CD8-positive, alpha-beta T cell (primary cell): ENCODE measurements at regions of chr19 and their contacts with region 1.

Region 1: DNA sequence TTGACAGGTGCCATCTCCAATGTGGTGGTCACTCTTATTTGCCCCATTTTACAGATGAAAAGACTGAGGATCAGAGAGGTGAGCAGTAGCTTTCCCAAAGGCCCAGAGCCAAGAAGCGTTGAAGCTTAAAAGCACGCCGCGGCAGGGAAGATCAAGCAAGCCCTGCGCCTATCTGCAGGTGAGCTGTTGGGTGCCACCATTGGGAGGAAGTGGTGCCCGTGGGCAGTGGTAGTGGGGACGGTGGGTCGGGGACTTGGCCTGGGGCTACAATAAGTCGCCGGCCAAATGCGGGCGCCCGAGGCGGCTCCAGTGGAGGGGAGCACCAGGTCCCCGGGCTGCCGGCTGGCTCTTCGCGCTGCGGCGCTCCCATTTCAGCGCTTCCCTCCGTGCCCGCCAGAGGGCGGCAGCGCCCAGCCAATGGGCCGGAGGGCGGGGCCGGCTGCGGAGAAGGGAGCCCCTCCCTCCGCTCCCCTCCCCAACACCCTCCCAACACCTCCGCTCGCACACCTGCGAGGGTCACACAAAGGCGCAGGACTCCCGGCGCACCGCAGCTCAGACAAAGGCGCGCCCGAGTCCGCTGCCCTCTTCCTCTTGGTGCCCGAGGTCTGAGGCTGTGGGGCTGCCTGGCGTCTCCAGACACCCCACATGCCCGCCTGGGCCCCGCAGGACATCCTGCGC is 744 bp upstream of the POU2F2 start:
- DNase-seq: peak; percentile 69 to 95 (median 83)
- ATAC-seq: peak; percentile 69
- H3K4me3 ChIP-seq: peak overlapping the region; percentile 64 to 96
- H3K4me3 Mint-ChIP-seq: peak overlapping the region; percentile 83
- H3K27ac ChIP-seq: peak overlapping the region; percentile 54 to 68
- H3K27ac Mint-ChIP-seq: peak overlapping the region; percentile 86
- H3K4me1 ChIP-seq: peaks cover 66% of the 10 kb centered on the region
- H3K4me1 Mint-ChIP-seq: peaks cover 63% of the 10 kb centered on the region
- H3K27me3 ChIP-seq: no peaks in the 10 kb centered on the region
- H3K27me3 Mint-ChIP-seq: no peaks in the 10 kb centered on the region
- CTCF ChIP-seq: peak; percentile 93

Region 2: GRCh38 chr19:42048992-42049391 is 84.0 kb before region 1 on chr19:
- CTCF ChIA-PET with region 1: no interaction called
- POLR2A ChIA-PET with region 1: no interaction called
- intact Hi-C with region 1: no loop called
- DNase-seq: no peak
- ATAC-seq: no peak
- H3K4me3 ChIP-seq: peak overlapping the region in 1 of 2 experiments; percentile 8
- H3K4me3 Mint-ChIP-seq: peak overlapping the region; percentile 55
- H3K27ac ChIP-seq: no peak overlapping the region
- H3K27ac Mint-ChIP-seq: no peak overlapping the region
- H3K4me1 ChIP-seq: no peaks in the 10 kb centered on the region
- H3K4me1 Mint-ChIP-seq: peaks cover 6% of the 10 kb centered on the region
- H3K27me3 ChIP-seq: no peaks in the 10 kb centered on the region
- H3K27me3 Mint-ChIP-seq: peaks cover 2% of the 10 kb centered on the region
- CTCF ChIP-seq: no peak

Region 3: DNA sequence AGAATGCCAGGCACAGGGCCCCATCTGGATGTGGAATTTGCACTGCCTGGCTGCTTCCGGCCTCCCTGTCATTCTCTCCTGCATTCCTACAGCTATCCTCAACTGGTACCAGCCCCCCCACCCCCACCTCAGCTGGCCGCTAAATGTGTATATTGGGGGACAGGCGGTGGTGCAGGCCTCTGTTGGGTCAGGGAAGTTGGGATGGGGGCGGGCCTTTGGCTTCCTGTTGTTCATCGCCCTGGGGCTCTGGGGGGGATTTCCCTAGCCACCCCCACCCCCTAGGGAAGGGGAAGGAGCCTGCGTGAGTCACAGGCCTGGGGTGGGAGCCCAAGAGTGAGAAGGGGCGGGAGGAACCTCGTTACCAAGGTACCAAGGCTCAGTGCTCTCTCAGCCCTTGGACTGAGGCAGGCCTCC is 11.3 kb before region 1 on chr19:
- CTCF ChIA-PET with region 1: interaction called, 20 read pairs
- POLR2A ChIA-PET with region 1: interaction called, 9 read pairs
- intact Hi-C with region 1: loop called in 1 of 2 experiments (anchors 1 kb)
- DNase-seq: peak; percentile 24 to 90 (median 81)
- ATAC-seq: peak; percentile 89
- H3K4me3 ChIP-seq: peak overlapping the region; percentile 19 to 27
- H3K4me3 Mint-ChIP-seq: peak overlapping the region; percentile 66
- H3K27ac ChIP-seq: peak overlapping the region; percentile 36 to 82
- H3K27ac Mint-ChIP-seq: peak overlapping the region; percentile 95
- H3K4me1 ChIP-seq: peaks cover 49% of the 10 kb centered on the region
- H3K4me1 Mint-ChIP-seq: peaks cover 59% of the 10 kb centered on the region
- H3K27me3 ChIP-seq: no peaks in the 10 kb centered on the region
- H3K27me3 Mint-ChIP-seq: no peaks in the 10 kb centered on the region
- CTCF ChIP-seq: no peak

Region 4: DNA sequence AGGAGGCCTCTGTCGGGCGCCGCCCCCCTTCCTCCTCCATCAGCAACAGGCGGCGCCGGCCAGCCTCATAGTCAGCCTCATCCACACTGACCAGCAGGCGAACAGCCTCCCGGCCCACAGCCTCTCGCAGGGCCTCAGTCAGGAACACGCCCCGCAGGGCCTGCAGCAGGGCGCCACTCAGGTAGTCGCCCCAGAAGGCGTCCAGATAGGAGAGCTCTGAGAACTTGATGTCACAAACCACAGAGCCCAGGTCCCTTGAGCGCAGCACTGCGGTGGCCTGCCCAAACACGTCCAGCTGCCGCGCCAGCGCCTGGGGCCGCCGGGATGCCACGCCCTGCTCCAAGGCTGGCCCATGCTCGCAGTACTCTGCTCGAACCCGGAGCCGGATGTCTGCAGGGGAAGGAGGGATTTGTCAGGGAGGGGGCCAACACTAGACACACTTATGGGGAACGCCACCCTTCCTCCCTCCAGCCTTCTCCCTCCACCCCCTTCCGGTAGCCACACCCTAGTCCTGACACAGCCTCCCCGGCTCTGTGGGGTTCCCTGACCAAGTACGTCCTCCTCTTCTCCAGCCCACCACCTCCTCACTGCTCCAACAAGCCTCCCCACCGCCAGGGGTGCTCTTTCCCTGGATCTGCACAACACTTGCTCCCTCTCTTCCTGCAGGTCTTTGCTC is 66.6 kb after region 1 on chr19:
- CTCF ChIA-PET with region 1: interaction called, 5 read pairs
- POLR2A ChIA-PET with region 1: interaction called, 3 read pairs
- intact Hi-C with region 1: loop called (anchors 1 kb)
- DNase-seq: peak in 7 of 9 experiments; percentile 36 to 80 (median 64)
- ATAC-seq: peak; percentile 30
- H3K4me3 ChIP-seq: peak overlapping the region; percentile 50 to 59
- H3K4me3 Mint-ChIP-seq: peak overlapping the region; percentile 87
- H3K27ac ChIP-seq: peak overlapping the region; percentile 88 to 93
- H3K27ac Mint-ChIP-seq: peak overlapping the region; percentile 95
- H3K4me1 ChIP-seq: peaks cover 84% of the 10 kb centered on the region
- H3K4me1 Mint-ChIP-seq: peaks cover 81% of the 10 kb centered on the region
- H3K27me3 ChIP-seq: no peaks in the 10 kb centered on the region
- H3K27me3 Mint-ChIP-seq: no peaks in the 10 kb centered on the region
- CTCF ChIP-seq: peak; percentile 29

Region 5: GRCh38 chr19:42268704-42269477 is 135.9 kb after region 1 on chr19 and contains the start of gene CIC:
- CTCF ChIA-PET with region 1: interaction called, 3 read pairs
- POLR2A ChIA-PET with region 1: no interaction called
- intact Hi-C with region 1: loop called in 1 of 2 experiments (anchors 1 kb)
- DNase-seq: peak; percentile 97 to 100 (median 99)
- ATAC-seq: peak; percentile 70
- H3K4me3 ChIP-seq: peak within 1 kb of the TSS; percentile 70 to 83
- H3K4me3 Mint-ChIP-seq: peak within 1 kb of the TSS; percentile 86
- H3K27ac ChIP-seq: peak within 1 kb of the TSS; percentile 93 to 99
- H3K27ac Mint-ChIP-seq: peak within 1 kb of the TSS; percentile 97
- H3K4me1 ChIP-seq: peaks cover 29% of the 10 kb centered on the region
- H3K4me1 Mint-ChIP-seq: peaks cover 34% of the 10 kb centered on the region
- H3K27me3 ChIP-seq: no peaks in the 10 kb centered on the region
- H3K27me3 Mint-ChIP-seq: no peaks in the 10 kb centered on the region
- CTCF ChIP-seq: no peak
- total RNA-seq, gene CIC: 111 to 112 TPM

Region 6: GRCh38 chr19:42301656-42302203 is 168.7 kb after region 1 on chr19 and contains the start of gene PRR19:
- CTCF ChIA-PET with region 1: interaction called, 15 read pairs
- POLR2A ChIA-PET with region 1: no interaction called
- intact Hi-C with region 1: loop called (anchors 1 kb)
- DNase-seq: peak in 1 of 9 experiments; percentile 46
- ATAC-seq: peak; percentile 5
- H3K4me3 ChIP-seq: peak within 1 kb of the TSS; percentile 88 to 89
- H3K4me3 Mint-ChIP-seq: peak within 1 kb of the TSS; percentile 87
- H3K27ac ChIP-seq: peak within 1 kb of the TSS; percentile 37 to 56
- H3K27ac Mint-ChIP-seq: peak within 1 kb of the TSS; percentile 49
- H3K4me1 ChIP-seq: peaks cover 19% of the 10 kb centered on the region
- H3K4me1 Mint-ChIP-seq: peaks cover 28% of the 10 kb centered on the region
- H3K27me3 ChIP-seq: no peaks in the 10 kb centered on the region
- H3K27me3 Mint-ChIP-seq: no peaks in the 10 kb centered on the region
- CTCF ChIP-seq: no peak
- total RNA-seq, gene PRR19: 0.19 TPM in 1 of 2 experiments, not detected in the other

Region 7: GRCh38 chr19:42423462-42424344 is 290.7 kb after region 1 on chr19:
- CTCF ChIA-PET with region 1: interaction called, 3 read pairs
- POLR2A ChIA-PET with region 1: no interaction called
- intact Hi-C with region 1: loop called (anchors 2 to 5 kb)
- DNase-seq: peak; percentile 87 to 95 (median 93)
- ATAC-seq: peak; percentile 86
- H3K4me3 ChIP-seq: peak overlapping the region; percentile 78 to 87
- H3K4me3 Mint-ChIP-seq: peak overlapping the region; percentile 93
- H3K27ac ChIP-seq: peak overlapping the region; percentile 49 to 74
- H3K27ac Mint-ChIP-seq: peak overlapping the region; percentile 87
- H3K4me1 ChIP-seq: peaks cover 31% of the 10 kb centered on the region
- H3K4me1 Mint-ChIP-seq: peaks cover 41% of the 10 kb centered on the region
- H3K27me3 ChIP-seq: no peaks in the 10 kb centered on the region
- H3K27me3 Mint-ChIP-seq: no peaks in the 10 kb centered on the region
- CTCF ChIP-seq: no peak